ENCODE measurements at regions of chr12 and their contacts with region 1.

Region 1: GRCh38 chr12:11545484-11546330 is 103.8 kb upstream of the ETV6 start:
- DNase-seq: peak in 8 of 9 donors; percentile 50 to 87 (median 81)
- ATAC-seq: peak; percentile 87
- H3K4me3 ChIP-seq: peak overlapping the region; percentile 50
- H3K4me3 Mint-ChIP-seq: peak overlapping the region; percentile 74 to 84 (median 80)
- H3K27ac ChIP-seq: peak overlapping the region; percentile 81
- H3K27ac Mint-ChIP-seq: peak overlapping the region; percentile 92 to 99 (median 96)
- H3K4me1 ChIP-seq: peaks cover 28 to 69% of the 10 kb centered on the region in 2 donors
- H3K4me1 Mint-ChIP-seq: peaks cover 31 to 88% (median 68%) of the 10 kb centered on the region in 7 donors
- H3K27me3 ChIP-seq: no peaks in the 10 kb centered on the region
- H3K27me3 Mint-ChIP-seq: peaks cover 0 to 5% (median 0%) of the 10 kb centered on the region in 5 donors

Region 2: DNA sequence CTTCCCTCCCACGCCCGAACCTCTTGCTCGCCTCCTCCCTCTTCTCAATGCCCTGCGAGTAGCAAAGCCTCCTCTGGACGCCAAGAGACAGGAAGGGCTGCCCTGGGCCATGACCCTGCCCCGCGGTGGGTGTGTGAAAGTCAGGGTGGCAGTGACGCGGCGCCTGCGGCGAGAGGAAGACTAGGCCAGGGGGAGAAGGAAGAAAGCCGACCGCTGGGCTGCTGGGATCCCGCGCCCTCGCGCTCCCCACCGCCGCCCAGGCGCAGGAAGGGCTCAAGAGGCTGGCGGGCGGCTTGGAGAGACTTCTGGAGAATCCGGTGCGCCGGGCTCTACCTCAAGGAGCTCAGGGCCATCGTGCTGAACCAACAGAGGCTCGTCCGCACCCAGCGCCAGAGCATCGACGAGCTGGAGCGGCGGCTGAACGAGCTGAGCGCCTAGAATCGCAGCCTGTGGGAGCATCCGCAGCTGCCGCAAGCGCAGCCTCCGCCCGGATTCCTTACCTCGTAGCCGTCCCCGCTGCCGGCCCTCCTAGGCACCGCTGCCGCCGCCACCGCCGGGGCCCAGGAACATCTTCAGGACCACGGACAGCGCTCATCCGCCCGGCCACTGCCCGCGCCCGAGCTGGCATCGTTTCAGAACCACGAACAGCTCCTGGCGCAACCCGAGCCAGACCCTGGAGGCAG is 45.4 kb before region 1 on chr12:
- CTCF ChIA-PET with region 1: no interaction called
- POLR2A ChIA-PET with region 1: no interaction called
- intact Hi-C with region 1: loop called (anchors 1 to 5 kb)
- DNase-seq: peak; percentile 63 to 89 (median 76)
- ATAC-seq: peak; percentile 95
- H3K4me3 ChIP-seq: no peak overlapping the region
- H3K4me3 Mint-ChIP-seq: no peak overlapping the region
- H3K27ac ChIP-seq: no peak overlapping the region
- H3K27ac Mint-ChIP-seq: peak overlapping the region in 5 of 9 donors; percentile 26 to 60 (median 38)
- H3K4me1 ChIP-seq: no peaks in the 10 kb centered on the region
- H3K4me1 Mint-ChIP-seq: peaks cover 0 to 6% (median 0%) of the 10 kb centered on the region in 7 donors
- H3K27me3 ChIP-seq: no peaks in the 10 kb centered on the region
- H3K27me3 Mint-ChIP-seq: peaks cover 22 to 40% (median 25%) of the 10 kb centered on the region in 5 donors

Region 3: GRCh38 chr12:11508699-11509098 is 37.0 kb before region 1 on chr12:
- CTCF ChIA-PET with region 1: interaction called, 4 read pairs
- POLR2A ChIA-PET with region 1: no interaction called
- intact Hi-C with region 1: loop called (anchors 1 to 5 kb)
- DNase-seq: no peak
- ATAC-seq: no peak
- H3K4me3 ChIP-seq: no peak overlapping the region
- H3K4me3 Mint-ChIP-seq: no peak overlapping the region
- H3K27ac ChIP-seq: no peak overlapping the region
- H3K27ac Mint-ChIP-seq: no peak overlapping the region
- H3K4me1 ChIP-seq: no peaks in the 10 kb centered on the region
- H3K4me1 Mint-ChIP-seq: peaks cover 3 to 16% (median 12%) of the 10 kb centered on the region in 7 donors
- H3K27me3 ChIP-seq: no peaks in the 10 kb centered on the region
- H3K27me3 Mint-ChIP-seq: peaks cover 0 to 16% (median 0%) of the 10 kb centered on the region in 5 donors

Region 4: GRCh38 chr12:11524446-11524845 is 21.3 kb before region 1 on chr12:
- CTCF ChIA-PET with region 1: no interaction called
- POLR2A ChIA-PET with region 1: no interaction called
- intact Hi-C with region 1: loop called in 1 of 2 experiments (anchors 2 kb)
- DNase-seq: no peak
- ATAC-seq: no peak
- H3K4me3 ChIP-seq: no peak overlapping the region
- H3K4me3 Mint-ChIP-seq: no peak overlapping the region
- H3K27ac ChIP-seq: no peak overlapping the region
- H3K27ac Mint-ChIP-seq: no peak overlapping the region
- H3K4me1 ChIP-seq: no peaks in the 10 kb centered on the region
- H3K4me1 Mint-ChIP-seq: peaks cover 0 to 4% (median 0%) of the 10 kb centered on the region in 7 donors
- H3K27me3 ChIP-seq: no peaks in the 10 kb centered on the region
- H3K27me3 Mint-ChIP-seq: peaks cover 0 to 42% (median 0%) of the 10 kb centered on the region in 5 donors

Region 5: GRCh38 chr12:11718768-11719253 is 173.1 kb after region 1 on chr12:
- CTCF ChIA-PET with region 1: no interaction called
- POLR2A ChIA-PET with region 1: no interaction called
- intact Hi-C with region 1: no loop called
- DNase-seq: no peak
- ATAC-seq: no peak
- H3K4me3 ChIP-seq: no peak overlapping the region
- H3K4me3 Mint-ChIP-seq: no peak overlapping the region
- H3K27ac ChIP-seq: no peak overlapping the region
- H3K27ac Mint-ChIP-seq: peak overlapping the region in 2 of 9 donors; percentile 52 to 58
- H3K4me1 ChIP-seq: no peaks in the 10 kb centered on the region
- H3K4me1 Mint-ChIP-seq: peaks cover 17 to 51% (median 23%) of the 10 kb centered on the region in 7 donors
- H3K27me3 ChIP-seq: no peaks in the 10 kb centered on the region
- H3K27me3 Mint-ChIP-seq: no peaks in the 10 kb centered on the region

Region 6: DNA sequence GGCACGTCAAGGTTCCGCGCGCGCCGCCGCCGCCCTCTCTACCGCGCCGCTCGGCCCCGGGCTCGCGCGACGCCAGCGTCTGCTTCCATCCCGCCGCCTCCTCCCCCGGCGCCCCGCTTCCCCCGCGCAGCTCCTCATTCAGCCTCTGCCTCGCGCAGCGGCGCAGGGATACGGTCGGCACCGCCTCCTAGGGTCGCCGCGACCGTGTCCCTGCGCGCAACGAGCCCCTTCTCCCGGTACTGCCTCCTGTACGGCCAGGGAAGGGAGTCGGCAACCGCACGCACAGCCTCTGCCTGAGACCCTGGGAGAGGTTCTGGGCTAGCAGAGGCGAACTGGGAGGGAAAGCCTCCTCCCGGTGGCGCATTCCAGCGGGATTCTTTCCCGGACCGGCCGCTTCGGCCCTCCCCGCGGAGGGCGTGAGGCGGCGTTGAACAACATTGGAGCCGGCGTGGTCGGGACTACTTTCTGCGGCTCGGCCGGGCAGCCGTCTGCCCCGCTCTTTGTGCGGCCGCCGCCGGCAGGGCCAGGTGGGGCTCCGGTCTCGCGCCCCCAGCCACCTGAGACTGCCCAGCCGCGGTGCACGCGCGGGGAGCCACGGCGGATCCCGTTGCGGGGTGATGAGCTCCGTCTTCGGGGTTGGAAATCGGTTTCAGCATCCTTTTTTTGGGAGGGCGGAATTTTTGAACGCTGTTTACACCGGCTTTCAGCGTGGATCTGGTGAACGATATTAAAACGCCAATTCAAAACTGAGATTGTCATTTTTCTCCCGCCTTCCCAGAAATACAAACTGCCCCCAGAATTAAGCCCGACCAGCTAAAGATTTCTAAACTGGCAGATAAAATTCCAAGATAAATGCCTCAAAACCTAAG is 721.4 kb after region 1 on chr12 and contains the start of gene LRP6:
- CTCF ChIA-PET with region 1: no interaction called
- POLR2A ChIA-PET with region 1: no interaction called
- intact Hi-C with region 1: loop called in 1 of 2 experiments (anchors 10 kb)
- DNase-seq: peak; percentile 57 to 83 (median 75)
- ATAC-seq: peak; percentile 91
- H3K4me3 ChIP-seq: peak within 1 kb of the TSS; percentile 86
- H3K4me3 Mint-ChIP-seq: peak within 1 kb of the TSS; percentile 79 to 93 (median 88)
- H3K27ac ChIP-seq: peak within 1 kb of the TSS; percentile 68
- H3K27ac Mint-ChIP-seq: peak within 1 kb of the TSS; percentile 29 to 88 (median 73)
- H3K4me1 ChIP-seq: peaks cover 8 to 10% of the 10 kb centered on the region in 2 donors
- H3K4me1 Mint-ChIP-seq: peaks cover 14 to 40% (median 31%) of the 10 kb centered on the region in 7 donors
- H3K27me3 ChIP-seq: peaks cover 0 to 10% of the 10 kb centered on the region in 2 donors
- H3K27me3 Mint-ChIP-seq: peaks cover 0 to 53% (median 14%) of the 10 kb centered on the region in 5 donors
- total RNA-seq, gene LRP6: 1.6 to 12.6 (median 7.4) TPM

Region 7: GRCh38 chr12:13536219-13536910 is 1990.7 kb after region 1 on chr12:
- CTCF ChIA-PET with region 1: no interaction called
- POLR2A ChIA-PET with region 1: no interaction called
- intact Hi-C with region 1: no loop called
- DNase-seq: no peak
- ATAC-seq: peak; percentile 59
- H3K4me3 ChIP-seq: no peak overlapping the region
- H3K4me3 Mint-ChIP-seq: no peak overlapping the region
- H3K27ac ChIP-seq: no peak overlapping the region
- H3K27ac Mint-ChIP-seq: no peak overlapping the region
- H3K4me1 ChIP-seq: no peaks in the 10 kb centered on the region
- H3K4me1 Mint-ChIP-seq: peaks cover 0 to 2% (median 0%) of the 10 kb centered on the region in 7 donors
- H3K27me3 ChIP-seq: no peaks in the 10 kb centered on the region
- H3K27me3 Mint-ChIP-seq: peaks cover 6 to 24% (median 19%) of the 10 kb centered on the region in 5 donors

Measured in naive thymus-derived CD4-positive, alpha-beta T cell (primary cell).